ENCODE measurements at regions of chr15 and their contacts with region 1.

Region 1: DNA sequence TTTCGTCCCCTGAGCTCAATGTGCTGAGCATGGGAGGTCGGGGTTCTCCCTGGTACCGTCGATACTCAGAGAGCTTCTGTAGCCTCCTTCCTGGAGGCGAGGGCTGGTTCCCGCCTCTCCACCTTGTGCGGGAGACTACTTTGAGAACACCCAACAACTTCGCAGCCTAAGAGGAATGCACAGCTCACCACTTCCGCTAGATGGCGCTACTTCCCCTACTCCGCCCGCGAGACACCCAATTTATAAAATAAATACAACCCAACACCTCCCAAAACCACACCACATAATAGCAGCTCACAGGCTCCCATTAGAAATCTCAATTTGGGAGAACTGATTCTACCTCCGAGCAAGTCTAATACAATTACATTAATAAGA is 1.2 kb downstream of the RGMA start:
- DNase-seq: peak; percentile 77 to 88 (median 86)
- H3K4me3 ChIP-seq: peak overlapping the region; percentile 68
- H3K27ac ChIP-seq: peak overlapping the region; percentile 40 to 79
- H3K4me1 ChIP-seq: peaks cover 6% of the 10 kb centered on the region
- H3K27me3 ChIP-seq: no peaks in the 10 kb centered on the region
- CTCF ChIP-seq: peak; percentile 82 to 93 (median 86)
- EP300 ChIP-seq: no peak
- POLR2A ChIP-seq: no peak

Region 2: DNA sequence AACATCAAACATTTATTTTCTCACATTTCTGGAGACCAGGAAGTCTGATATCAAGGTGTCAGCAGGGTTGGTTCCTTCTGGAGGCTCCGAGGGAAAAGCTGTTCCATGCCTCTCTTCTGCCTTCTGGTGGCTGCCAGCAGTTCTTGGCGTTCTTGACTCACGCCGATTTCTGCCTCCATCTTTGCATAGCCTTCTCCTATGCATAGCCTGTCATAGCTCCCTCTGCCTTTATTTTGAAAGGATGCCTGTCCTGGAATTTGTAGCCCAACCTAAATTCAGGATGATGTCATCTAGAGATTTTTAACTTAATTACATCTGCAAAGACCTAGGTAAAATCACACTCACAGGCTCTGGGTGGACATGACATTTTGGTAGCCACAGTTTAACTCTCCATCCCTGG is 69.2 kb before region 1 on chr15:
- intact Hi-C with region 1: no loop called
- DNase-seq: no peak
- H3K4me3 ChIP-seq: no peak overlapping the region
- H3K27ac ChIP-seq: no peak overlapping the region
- H3K4me1 ChIP-seq: no peaks in the 10 kb centered on the region
- H3K27me3 ChIP-seq: no peaks in the 10 kb centered on the region
- CTCF ChIP-seq: no peak
- EP300 ChIP-seq: no peak
- POLR2A ChIP-seq: no peak

Region 3: DNA sequence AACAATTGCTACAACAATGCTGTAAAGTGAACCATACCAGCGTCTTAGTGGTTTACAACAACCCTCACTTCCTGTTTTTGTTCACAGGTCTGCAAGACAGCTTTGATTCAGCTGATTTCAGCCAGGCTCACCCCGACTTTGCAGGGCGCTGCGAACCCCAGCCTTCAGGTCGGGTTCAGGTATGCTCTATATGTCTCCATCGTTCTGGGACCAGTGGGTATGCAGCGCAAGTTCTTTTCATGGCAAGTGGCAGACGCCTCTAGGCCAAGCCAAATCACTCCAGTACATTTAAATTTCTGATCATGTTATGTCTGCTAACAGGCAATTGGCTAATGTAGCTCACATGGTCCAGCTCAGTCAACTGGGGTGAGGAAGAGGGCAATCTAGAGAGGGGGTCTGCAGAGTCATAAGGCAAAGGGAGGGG is 53.6 kb after region 1 on chr15:
- intact Hi-C with region 1: loop called in 1 of 4 experiments (anchors 10 kb)
- DNase-seq: no peak
- H3K4me3 ChIP-seq: no peak overlapping the region
- H3K27ac ChIP-seq: no peak overlapping the region
- H3K4me1 ChIP-seq: no peaks in the 10 kb centered on the region
- H3K27me3 ChIP-seq: no peaks in the 10 kb centered on the region
- CTCF ChIP-seq: no peak
- EP300 ChIP-seq: no peak
- POLR2A ChIP-seq: no peak

Region 4: GRCh38 chr15:93253681-93254080 is 165.9 kb after region 1 on chr15:
- intact Hi-C with region 1: no loop called
- DNase-seq: no peak
- H3K4me3 ChIP-seq: no peak overlapping the region
- H3K27ac ChIP-seq: no peak overlapping the region
- H3K4me1 ChIP-seq: no peaks in the 10 kb centered on the region
- H3K27me3 ChIP-seq: no peaks in the 10 kb centered on the region
- CTCF ChIP-seq: no peak
- EP300 ChIP-seq: no peak
- POLR2A ChIP-seq: no peak

Region 5: DNA sequence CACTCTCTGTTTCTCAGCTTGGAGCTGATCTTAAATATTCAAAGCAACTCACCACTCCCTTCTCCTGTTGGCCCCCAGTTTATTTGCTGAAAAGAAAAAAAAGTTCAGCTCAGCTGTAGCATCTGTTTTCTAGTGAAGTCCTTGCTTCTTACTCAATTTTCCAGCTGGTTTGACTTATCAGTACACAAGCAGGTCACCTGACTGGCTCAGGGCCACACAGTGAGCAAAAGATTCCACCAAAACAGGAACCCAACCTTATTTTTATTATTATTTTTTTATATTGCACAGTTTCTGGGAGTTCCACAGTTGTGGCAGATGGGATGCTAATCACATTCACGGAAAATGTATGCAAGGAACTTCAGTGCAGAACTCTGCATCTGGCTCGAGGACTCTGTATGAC is 391.9 kb after region 1 on chr15:
- intact Hi-C with region 1: loop called in 1 of 4 experiments (anchors 10 kb)
- DNase-seq: peak; percentile 61 to 81 (median 71)
- H3K4me3 ChIP-seq: no peak overlapping the region
- H3K27ac ChIP-seq: peak overlapping the region in 1 of 2 donors; percentile 22
- H3K4me1 ChIP-seq: peaks cover 21% of the 10 kb centered on the region
- H3K27me3 ChIP-seq: no peaks in the 10 kb centered on the region
- CTCF ChIP-seq: no peak
- EP300 ChIP-seq: no peak
- POLR2A ChIP-seq: no peak

Region 6: DNA sequence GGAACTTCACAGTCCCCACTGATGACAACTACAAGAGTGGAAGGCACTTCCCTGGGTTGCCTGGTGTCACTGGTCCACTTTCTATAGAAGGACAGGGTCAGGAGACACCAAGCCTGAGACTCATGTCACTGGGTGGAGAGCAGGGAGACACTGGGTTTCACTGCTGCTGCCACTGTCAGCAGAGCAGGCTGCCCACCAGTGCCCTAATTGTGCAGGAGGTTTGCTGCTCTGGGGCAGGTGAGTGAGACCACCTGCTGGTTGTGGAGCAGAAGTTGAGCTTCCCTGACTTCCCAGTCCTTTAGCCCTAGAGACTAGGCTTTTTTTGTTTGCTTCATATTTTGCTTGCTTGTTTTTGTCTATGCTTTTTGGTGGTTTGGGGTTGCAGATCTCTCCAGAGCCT is 529.6 kb after region 1 on chr15:
- intact Hi-C with region 1: loop called in 1 of 4 experiments (anchors 5 kb)
- DNase-seq: no peak
- H3K4me3 ChIP-seq: no peak overlapping the region
- H3K27ac ChIP-seq: no peak overlapping the region
- H3K4me1 ChIP-seq: no peaks in the 10 kb centered on the region
- H3K27me3 ChIP-seq: no peaks in the 10 kb centered on the region
- CTCF ChIP-seq: no peak
- EP300 ChIP-seq: no peak
- POLR2A ChIP-seq: no peak

Measured in ovary (tissue), 10 donors.